A549 (cell line): ENCODE measurements at regions of chr19 and their contacts with region 1.

Region 1: GRCh38 chr19:35269421-35270117 is 807 bp downstream of the USF2 start:
- DNase-seq: peak; percentile 92 to 97
- ATAC-seq: peak; percentile 70 to 83
- H3K4me3 ChIP-seq: peak overlapping the region; percentile 81
- H3K27ac ChIP-seq: peak overlapping the region; percentile 97 to 99
- H3K4me1 ChIP-seq: peaks cover 14% of the 10 kb centered on the region
- CTCF ChIP-seq: peak; percentile 100
- EP300 ChIP-seq: no peak
- POLR2A ChIP-seq: no peak; the same call in none of the 2 replicates
- RAD21 ChIP-seq: peak; percentile 65 to 89

Region 2: DNA sequence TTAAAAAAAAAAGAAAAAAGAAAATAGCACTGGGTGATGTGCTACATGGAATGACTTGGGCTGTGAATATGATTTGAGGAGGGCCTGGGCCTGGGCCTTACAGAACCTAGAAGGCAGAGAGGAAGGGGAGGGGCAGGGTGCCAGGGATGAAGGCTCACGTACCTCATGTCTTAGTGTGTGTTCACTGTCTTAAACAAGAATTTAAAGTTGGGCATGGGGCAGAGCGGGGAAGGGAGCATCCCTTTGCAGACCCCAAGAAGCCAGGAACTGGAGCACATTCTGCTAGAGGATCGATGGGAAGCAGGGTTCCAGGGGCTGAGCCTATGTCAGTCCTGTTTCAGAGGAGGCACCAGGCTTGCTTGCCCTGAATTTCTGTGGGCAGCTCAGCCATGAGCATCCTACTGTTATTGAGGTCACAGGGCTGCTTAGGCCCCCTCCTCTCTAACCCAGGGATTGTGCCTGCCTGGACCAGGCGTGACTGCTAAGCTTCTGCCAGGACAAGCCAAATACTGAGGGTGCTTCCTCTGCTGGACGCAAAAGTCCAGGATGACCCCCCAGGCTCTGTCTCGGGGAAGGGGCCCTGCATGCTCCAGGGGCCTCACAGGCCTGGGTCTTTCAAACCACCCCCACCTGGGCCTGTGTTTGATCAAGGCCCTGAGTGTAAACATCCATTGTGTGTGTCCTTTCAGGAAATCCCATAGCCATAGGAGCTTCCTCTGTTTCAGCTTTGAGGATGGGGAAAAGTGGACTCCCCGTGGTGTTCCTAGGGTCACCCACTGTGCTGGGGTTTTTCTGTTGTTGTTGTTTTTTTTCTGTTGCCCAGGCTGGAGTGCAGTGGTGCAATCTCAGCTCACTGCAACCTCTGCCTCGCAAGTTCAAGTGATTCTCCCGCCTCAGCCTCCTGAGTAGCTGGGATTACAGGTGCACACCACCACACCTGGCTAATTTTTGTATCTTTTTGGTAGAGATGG is 16.0 kb before region 1 on chr19:
- CTCF ChIA-PET with region 1: interaction called, 11 read pairs
- POLR2A ChIA-PET with region 1: interaction called, 4 read pairs
- DNase-seq: no peak
- ATAC-seq: no peak
- H3K4me3 ChIP-seq: no peak overlapping the region
- H3K27ac ChIP-seq: no peak overlapping the region
- H3K4me1 ChIP-seq: peaks cover 5% of the 10 kb centered on the region; the same call in 1 of the 3 replicates
- CTCF ChIP-seq: no peak
- EP300 ChIP-seq: no peak
- POLR2A ChIP-seq: no peak
- RAD21 ChIP-seq: no peak

Region 3: DNA sequence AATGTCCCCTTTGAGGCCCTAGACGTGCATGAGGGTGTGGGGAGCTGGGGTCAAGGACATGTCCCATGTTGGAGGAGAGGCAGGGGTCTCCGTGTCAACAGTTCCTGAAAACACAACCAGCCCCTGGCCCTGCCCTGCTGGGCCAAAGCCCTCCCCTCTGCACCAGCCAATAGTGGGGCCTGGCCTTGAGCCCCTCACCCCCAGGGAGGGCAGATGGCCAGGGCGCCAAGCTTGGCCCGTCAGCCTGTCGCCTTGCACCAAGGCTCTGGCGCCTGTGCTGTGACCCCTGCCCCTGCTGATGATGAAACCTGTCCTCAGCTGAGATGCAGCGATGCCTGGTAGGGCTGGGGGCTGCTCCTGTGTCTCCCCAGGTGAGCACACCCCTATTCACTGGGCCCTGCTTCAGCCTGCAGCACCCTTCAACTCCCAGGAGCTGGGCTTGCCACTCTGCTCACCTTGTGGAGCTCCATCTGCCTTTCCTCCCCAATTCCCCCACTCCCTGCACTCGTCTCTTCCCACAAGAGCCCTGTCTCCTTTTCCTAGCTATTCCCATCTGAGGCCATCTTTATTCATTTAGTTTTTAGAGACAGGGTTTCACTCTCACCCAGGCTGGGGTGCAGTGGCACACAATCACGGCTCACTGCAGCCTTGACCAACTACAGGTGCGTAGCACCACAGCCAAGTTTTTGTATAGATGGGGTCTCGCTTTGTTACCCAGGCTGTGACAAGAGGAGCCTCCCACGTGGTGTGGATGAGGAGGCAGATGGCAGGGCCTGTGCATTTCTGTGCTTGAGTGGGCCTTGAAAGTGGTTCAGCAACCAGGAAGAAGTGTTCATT is 10.6 kb after region 1 on chr19:
- CTCF ChIA-PET with region 1: interaction called, 97 read pairs
- POLR2A ChIA-PET with region 1: interaction called, 3 read pairs
- DNase-seq: no peak
- ATAC-seq: peak in 1 of 2 experiments; percentile 4; a peak in 2 of 6 replicates
- H3K4me3 ChIP-seq: no peak overlapping the region
- H3K27ac ChIP-seq: no peak overlapping the region
- H3K4me1 ChIP-seq: no peaks in the 10 kb centered on the region
- CTCF ChIP-seq: no peak
- EP300 ChIP-seq: no peak
- POLR2A ChIP-seq: 0 out of 2 replicates have a peak, but pooled peaks have one; percentile 1
- RAD21 ChIP-seq: no peak

Region 4: DNA sequence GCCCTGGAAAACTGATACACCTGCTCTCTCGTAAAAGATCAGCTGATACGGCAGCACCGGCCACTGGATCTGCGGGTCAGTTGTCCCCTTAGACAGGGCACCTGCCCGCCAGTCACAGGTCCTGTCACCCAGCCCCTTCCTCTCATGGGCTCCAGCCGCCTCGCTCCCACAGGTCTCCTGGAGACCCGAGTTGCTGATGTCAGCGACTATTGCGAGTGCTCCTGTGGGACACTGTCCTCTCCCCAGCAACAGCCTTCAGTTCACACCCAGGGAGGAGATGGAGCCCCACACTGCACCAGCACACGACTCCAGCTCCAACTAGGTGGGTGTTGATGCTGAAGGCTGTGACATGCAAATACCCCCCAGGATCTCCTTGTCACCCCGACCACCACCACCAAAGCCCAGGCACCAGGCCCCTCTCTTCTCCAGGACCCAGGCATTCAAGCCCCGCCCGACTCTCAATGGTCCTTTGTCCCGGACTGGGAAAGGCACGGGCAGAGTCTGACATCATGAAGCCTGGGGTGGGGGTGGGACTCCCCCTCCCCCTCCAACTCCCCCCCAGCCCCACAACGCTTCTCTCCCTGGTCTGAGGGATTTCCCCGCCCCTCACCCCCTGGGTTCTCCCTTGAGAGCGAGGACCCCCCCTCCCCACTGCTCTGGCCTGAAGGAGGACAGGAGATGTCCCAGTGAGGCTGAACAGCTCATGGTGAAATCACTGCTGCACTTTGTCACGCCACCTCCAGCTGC is 21.0 kb after region 1 on chr19:
- CTCF ChIA-PET with region 1: interaction called, 97 read pairs
- POLR2A ChIA-PET with region 1: interaction called, 3 read pairs
- DNase-seq: no peak
- ATAC-seq: 0 out of 6 replicates have a peak, but pooled peaks of 1 of the 2 experiments have one; percentile 8
- H3K4me3 ChIP-seq: no peak overlapping the region
- H3K27ac ChIP-seq: no peak overlapping the region
- H3K4me1 ChIP-seq: no peaks in the 10 kb centered on the region
- CTCF ChIP-seq: no peak
- EP300 ChIP-seq: no peak
- POLR2A ChIP-seq: no peak
- RAD21 ChIP-seq: no peak

Region 5: DNA sequence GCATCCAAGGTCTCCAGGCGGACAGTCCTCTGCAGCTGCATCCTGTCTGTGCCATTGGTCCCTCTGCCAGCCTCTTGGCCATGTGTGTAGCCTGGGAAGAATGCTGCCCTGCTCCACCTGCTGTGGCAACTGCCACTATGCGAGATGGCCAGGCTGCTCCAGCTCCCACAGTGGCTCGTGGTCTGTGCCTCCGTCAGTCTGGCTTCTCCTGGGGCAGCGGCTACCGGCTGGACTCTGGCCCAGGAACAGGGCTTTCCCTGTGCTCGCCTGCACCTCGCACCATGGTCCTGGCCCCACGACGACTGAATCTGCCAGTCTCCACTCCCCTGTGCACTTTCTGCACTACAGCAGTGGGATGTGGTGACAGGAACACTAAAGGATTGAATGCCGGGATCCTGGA is 151.8 kb after region 1 on chr19:
- CTCF ChIA-PET with region 1: no interaction called
- POLR2A ChIA-PET with region 1: no interaction called
- DNase-seq: no peak
- ATAC-seq: no peak
- H3K4me3 ChIP-seq: no peak overlapping the region
- H3K27ac ChIP-seq: no peak overlapping the region
- H3K4me1 ChIP-seq: 0 out of 3 replicates have a peak, but pooled peaks cover 8% of the 10 kb centered on the region
- CTCF ChIP-seq: no peak
- EP300 ChIP-seq: no peak
- POLR2A ChIP-seq: no peak
- RAD21 ChIP-seq: no peak